Stomach (tissue), 19 donors: ENCODE measurements at regions of chr4 and their contacts with region 1.

Region 1: DNA sequence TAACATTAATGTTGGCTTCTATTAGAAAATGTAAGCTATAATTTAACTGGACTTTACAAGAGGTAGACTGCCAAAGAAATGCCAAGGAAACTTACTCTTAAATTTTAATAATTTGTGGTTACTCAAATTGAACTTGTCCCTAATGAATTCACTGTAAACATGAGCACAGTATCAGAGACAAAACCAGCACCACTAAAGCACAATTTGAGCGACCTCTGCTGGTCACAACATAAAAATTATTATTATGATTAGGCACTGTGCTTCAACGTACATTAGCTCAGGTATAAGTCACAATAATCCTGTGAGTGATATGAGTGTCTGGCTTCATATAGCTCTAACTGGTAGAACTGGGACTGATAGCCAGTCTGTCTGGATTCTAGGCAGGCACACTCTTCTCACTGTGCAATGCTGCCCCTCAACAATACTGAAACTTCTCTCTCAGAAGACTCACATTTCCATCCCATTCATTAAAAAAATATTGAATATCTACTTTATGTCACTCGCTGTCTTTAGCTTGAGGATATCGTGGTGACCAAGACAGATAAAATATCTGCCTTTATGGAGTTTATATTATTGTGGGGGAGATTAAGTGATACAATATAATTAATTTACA is 8.0 kb downstream of the NUDT6 start:
- DNase-seq: peak in 1 of 2 donors; percentile 77
- H3K4me3 ChIP-seq: no peak overlapping the region
- H3K27ac ChIP-seq: no peak overlapping the region
- H3K4me1 ChIP-seq: no peaks in the 10 kb centered on the region
- H3K27me3 ChIP-seq: no peaks in the 10 kb centered on the region
- CTCF ChIP-seq: peak in 1 of 7 experiments; percentile 41
- EP300 ChIP-seq: no peak
- POLR2A ChIP-seq: no peak

Region 2: GRCh38 chr4:122512430-122512829 is 402.0 kb before region 1 on chr4:
- intact Hi-C with region 1: no loop called
- DNase-seq: no peak
- H3K4me3 ChIP-seq: no peak overlapping the region
- H3K27ac ChIP-seq: no peak overlapping the region
- H3K4me1 ChIP-seq: no peaks in the 10 kb centered on the region
- H3K27me3 ChIP-seq: no peaks in the 10 kb centered on the region
- CTCF ChIP-seq: no peak
- EP300 ChIP-seq: no peak
- POLR2A ChIP-seq: no peak

Region 3: DNA sequence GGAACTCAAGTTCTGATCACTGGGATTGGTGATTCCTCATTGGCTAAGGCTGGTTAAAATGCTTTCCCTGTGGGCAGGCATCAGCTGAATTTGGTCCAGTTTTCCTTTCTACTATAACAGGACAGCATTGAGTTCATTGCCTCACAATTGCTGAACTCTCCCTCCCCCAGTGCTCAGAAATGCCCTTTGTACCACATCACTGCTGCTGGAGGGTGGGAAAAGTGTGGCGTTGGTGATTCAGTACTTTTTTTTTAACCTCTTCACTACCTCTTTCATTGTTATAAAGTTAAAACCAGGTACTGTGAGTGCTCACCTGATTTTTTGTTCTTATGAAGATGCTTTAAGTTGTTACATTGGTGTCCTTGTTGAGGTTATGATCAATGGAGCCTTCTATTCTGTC is 388.5 kb before region 1 on chr4:
- intact Hi-C with region 1: no loop called
- DNase-seq: no peak
- H3K4me3 ChIP-seq: no peak overlapping the region
- H3K27ac ChIP-seq: no peak overlapping the region
- H3K4me1 ChIP-seq: no peaks in the 10 kb centered on the region
- H3K27me3 ChIP-seq: no peaks in the 10 kb centered on the region
- CTCF ChIP-seq: no peak
- EP300 ChIP-seq: no peak
- POLR2A ChIP-seq: no peak

Region 4: DNA sequence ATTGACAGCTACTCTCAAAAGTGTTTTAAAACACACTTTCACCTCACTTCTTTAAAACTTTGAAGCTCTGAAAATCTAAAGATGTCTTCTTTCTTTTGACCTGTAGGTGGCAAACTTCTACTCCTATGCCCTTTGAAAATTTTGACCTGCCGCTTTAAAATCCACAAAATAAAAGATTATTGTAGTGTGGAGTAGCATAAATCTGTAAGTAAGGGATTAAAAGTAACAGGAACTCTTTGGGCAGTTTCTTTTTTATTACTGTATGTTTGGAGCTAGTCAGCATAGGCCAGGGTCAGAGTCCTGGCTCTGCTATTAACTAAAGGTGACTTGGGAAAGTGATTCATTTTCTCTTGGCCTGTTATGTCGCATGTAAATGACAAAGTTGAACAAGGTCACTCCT is 156.4 kb before region 1 on chr4:
- intact Hi-C with region 1: loop called (anchors 10 kb)
- DNase-seq: peak in 1 of 2 donors; percentile 58
- H3K4me3 ChIP-seq: no peak overlapping the region
- H3K27ac ChIP-seq: no peak overlapping the region
- H3K4me1 ChIP-seq: peaks cover 0 to 8% (median 4%) of the 10 kb centered on the region in 4 donors
- H3K27me3 ChIP-seq: no peaks in the 10 kb centered on the region
- CTCF ChIP-seq: peak in 5 of 7 experiments; percentile 47 to 82 (median 59)
- EP300 ChIP-seq: no peak
- POLR2A ChIP-seq: no peak

Region 5: GRCh38 chr4:123133397-123134050 is 219.1 kb after region 1 on chr4:
- intact Hi-C with region 1: no loop called
- DNase-seq: no peak
- H3K4me3 ChIP-seq: no peak overlapping the region
- H3K27ac ChIP-seq: no peak overlapping the region
- H3K4me1 ChIP-seq: no peaks in the 10 kb centered on the region
- H3K27me3 ChIP-seq: no peaks in the 10 kb centered on the region
- CTCF ChIP-seq: no peak
- EP300 ChIP-seq: no peak
- POLR2A ChIP-seq: no peak